Esophagus muscularis mucosa (tissue), 4 donors: ENCODE measurements at regions of chr11 and their contacts with region 1.

Region 1: GRCh38 chr11:102831489-102832440 is 11.6 kb downstream of the MMP3 start:
- DNase-seq: no peak
- H3K4me3 ChIP-seq: peak overlapping the region in 2 of 4 donors; percentile 3 to 31
- H3K27ac ChIP-seq: no peak overlapping the region
- H3K4me1 ChIP-seq: no peaks in the 10 kb centered on the region
- H3K27me3 ChIP-seq: peaks cover 0 to 25% (median 0%) of the 10 kb centered on the region in 4 donors
- CTCF ChIP-seq: peak in 1 of 3 experiments; percentile 21
- EP300 ChIP-seq: no peak
- POLR2A ChIP-seq: no peak

Region 2: GRCh38 chr11:102933627-102934026 is 101.9 kb after region 1 on chr11:
- intact Hi-C with region 1: loop called (anchors 10 kb)
- DNase-seq: no peak
- H3K4me3 ChIP-seq: no peak overlapping the region
- H3K27ac ChIP-seq: no peak overlapping the region
- H3K4me1 ChIP-seq: no peaks in the 10 kb centered on the region
- H3K27me3 ChIP-seq: peaks cover 0 to 5% (median 0%) of the 10 kb centered on the region in 4 donors
- CTCF ChIP-seq: no peak
- EP300 ChIP-seq: no peak
- POLR2A ChIP-seq: no peak

Region 3: DNA sequence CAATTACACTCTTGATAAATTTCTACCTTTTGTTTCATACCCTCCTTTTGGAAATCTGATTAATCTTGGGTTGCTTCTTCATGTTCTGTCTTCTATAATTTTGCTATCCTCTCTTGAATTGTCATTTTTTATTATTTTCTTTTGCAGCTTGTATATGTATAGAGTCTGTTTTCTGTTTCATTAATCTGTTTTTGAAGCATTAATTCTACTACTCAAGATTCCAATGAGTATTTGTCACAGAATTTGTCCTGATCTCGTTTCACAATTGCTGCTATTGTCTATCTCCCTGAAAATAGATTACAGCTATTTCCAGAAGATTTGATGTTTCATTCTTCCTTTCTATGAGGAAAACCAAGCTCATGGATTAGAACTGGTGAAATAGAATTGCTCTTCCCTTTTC is 683.5 kb after region 1 on chr11:
- intact Hi-C with region 1: no loop called
- DNase-seq: no peak
- H3K4me3 ChIP-seq: no peak overlapping the region
- H3K27ac ChIP-seq: no peak overlapping the region
- H3K4me1 ChIP-seq: no peaks in the 10 kb centered on the region
- H3K27me3 ChIP-seq: no peaks in the 10 kb centered on the region
- CTCF ChIP-seq: no peak
- EP300 ChIP-seq: no peak
- POLR2A ChIP-seq: no peak